ENCODE measurements at regions of chr11 and their contacts with region 1.

Region 1: GRCh38 chr11:15101072-15101709 is 13.5 kb upstream of the INSC start:
- DNase-seq: peak; percentile 80
- H3K4me3 Mint-ChIP-seq: no peak overlapping the region
- H3K27ac Mint-ChIP-seq: no peak overlapping the region
- H3K4me1 Mint-ChIP-seq: peaks cover 21% of the 10 kb centered on the region
- H3K27me3 Mint-ChIP-seq: no peaks in the 10 kb centered on the region
- CTCF ChIP-seq: peak; percentile 93

Region 2: GRCh38 chr11:15113381-15113780 is 12.2 kb after region 1 on chr11:
- CTCF ChIA-PET with region 1: interaction called, 59 read pairs
- POLR2A ChIA-PET with region 1: interaction called, 5 read pairs
- intact Hi-C with region 1: no loop called
- DNase-seq: no peak
- H3K4me3 Mint-ChIP-seq: no peak overlapping the region
- H3K27ac Mint-ChIP-seq: no peak overlapping the region
- H3K4me1 Mint-ChIP-seq: peaks cover 8% of the 10 kb centered on the region
- H3K27me3 Mint-ChIP-seq: no peaks in the 10 kb centered on the region
- CTCF ChIP-seq: no peak

Region 3: GRCh38 chr11:15141381-15141780 is 40.2 kb after region 1 on chr11:
- CTCF ChIA-PET with region 1: interaction called, 14 read pairs
- POLR2A ChIA-PET with region 1: no interaction called
- intact Hi-C with region 1: no loop called
- DNase-seq: no peak
- H3K4me3 Mint-ChIP-seq: no peak overlapping the region
- H3K27ac Mint-ChIP-seq: no peak overlapping the region
- H3K4me1 Mint-ChIP-seq: no peaks in the 10 kb centered on the region
- H3K27me3 Mint-ChIP-seq: no peaks in the 10 kb centered on the region
- CTCF ChIP-seq: no peak

Region 4: GRCh38 chr11:15199693-15200092 is 98.5 kb after region 1 on chr11:
- CTCF ChIA-PET with region 1: interaction called, 276 read pairs
- POLR2A ChIA-PET with region 1: no interaction called
- intact Hi-C with region 1: no loop called
- DNase-seq: peak; percentile 94
- H3K4me3 Mint-ChIP-seq: no peak overlapping the region
- H3K27ac Mint-ChIP-seq: no peak overlapping the region
- H3K4me1 Mint-ChIP-seq: peaks cover 17% of the 10 kb centered on the region
- H3K27me3 Mint-ChIP-seq: no peaks in the 10 kb centered on the region
- CTCF ChIP-seq: no peak

Region 5: DNA sequence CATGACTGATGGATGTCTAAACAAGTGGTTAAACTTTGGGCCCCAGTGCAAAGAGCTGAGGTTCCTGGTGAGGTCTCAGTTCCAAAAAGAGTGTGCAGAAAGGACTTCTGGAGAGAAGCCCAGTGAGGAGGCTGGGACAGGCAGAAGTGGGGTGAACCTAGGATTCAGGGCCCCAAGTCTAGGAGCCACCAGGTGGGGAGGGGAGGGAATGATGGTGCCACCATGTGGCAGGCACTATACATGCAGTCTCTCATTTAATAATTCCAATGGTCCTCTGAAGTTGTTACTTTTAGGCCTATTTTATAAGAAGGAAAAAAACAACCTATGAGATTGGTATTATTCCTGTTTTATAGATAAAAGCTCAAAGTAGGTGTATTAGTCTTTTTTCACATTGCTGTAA is 115.5 kb after region 1 on chr11:
- CTCF ChIA-PET with region 1: interaction called, 276 read pairs
- POLR2A ChIA-PET with region 1: interaction called, 3 read pairs
- intact Hi-C with region 1: no loop called
- DNase-seq: peak; percentile 25
- H3K4me3 Mint-ChIP-seq: no peak overlapping the region
- H3K27ac Mint-ChIP-seq: no peak overlapping the region
- H3K4me1 Mint-ChIP-seq: no peaks in the 10 kb centered on the region
- H3K27me3 Mint-ChIP-seq: no peaks in the 10 kb centered on the region
- CTCF ChIP-seq: peak; percentile 23

Measured in MCF 10A (cell line).